AG04450 (cell line): ENCODE measurements at regions of chr14 and their contacts with region 1.

Region 1: DNA sequence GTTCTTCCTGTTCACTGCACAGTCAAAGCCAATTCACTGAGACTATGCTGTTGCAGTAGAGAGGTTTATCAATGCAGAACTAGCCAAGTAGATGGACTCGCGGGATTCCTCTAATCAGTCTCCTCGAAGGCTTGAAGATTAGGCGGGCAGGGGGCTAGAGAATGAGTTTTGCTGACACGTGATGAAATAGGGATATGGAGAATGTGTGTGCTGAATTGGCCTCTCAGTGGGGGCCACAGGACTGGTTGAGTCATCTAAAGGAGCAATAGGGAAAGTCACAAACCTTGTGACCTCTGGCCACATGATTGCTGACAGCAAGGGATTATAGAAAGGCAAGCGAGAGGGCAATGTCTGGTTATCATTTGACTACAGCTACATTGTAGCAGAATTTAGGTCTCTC is 12.7 kb downstream of the MIPOL1 start:
- DNase-seq: no peak
- H3K4me3 ChIP-seq: no peak overlapping the region
- H3K27ac ChIP-seq: no peak overlapping the region
- H3K27me3 ChIP-seq: no peaks in the 10 kb centered on the region
- CTCF ChIP-seq: no peak

Region 2: GRCh38 chr14:37753459-37753858 is 543.0 kb after region 1 on chr14:
- CTCF ChIA-PET with region 1: no interaction called
- POLR2A ChIA-PET with region 1: interaction called, 13 read pairs
- DNase-seq: no peak
- H3K4me3 ChIP-seq: no peak overlapping the region
- H3K27ac ChIP-seq: no peak overlapping the region
- H3K27me3 ChIP-seq: no peaks in the 10 kb centered on the region
- CTCF ChIP-seq: no peak